OCI-LY7 (cell line): ENCODE measurements at regions of chr17 and their contacts with region 1.

Region 1: DNA sequence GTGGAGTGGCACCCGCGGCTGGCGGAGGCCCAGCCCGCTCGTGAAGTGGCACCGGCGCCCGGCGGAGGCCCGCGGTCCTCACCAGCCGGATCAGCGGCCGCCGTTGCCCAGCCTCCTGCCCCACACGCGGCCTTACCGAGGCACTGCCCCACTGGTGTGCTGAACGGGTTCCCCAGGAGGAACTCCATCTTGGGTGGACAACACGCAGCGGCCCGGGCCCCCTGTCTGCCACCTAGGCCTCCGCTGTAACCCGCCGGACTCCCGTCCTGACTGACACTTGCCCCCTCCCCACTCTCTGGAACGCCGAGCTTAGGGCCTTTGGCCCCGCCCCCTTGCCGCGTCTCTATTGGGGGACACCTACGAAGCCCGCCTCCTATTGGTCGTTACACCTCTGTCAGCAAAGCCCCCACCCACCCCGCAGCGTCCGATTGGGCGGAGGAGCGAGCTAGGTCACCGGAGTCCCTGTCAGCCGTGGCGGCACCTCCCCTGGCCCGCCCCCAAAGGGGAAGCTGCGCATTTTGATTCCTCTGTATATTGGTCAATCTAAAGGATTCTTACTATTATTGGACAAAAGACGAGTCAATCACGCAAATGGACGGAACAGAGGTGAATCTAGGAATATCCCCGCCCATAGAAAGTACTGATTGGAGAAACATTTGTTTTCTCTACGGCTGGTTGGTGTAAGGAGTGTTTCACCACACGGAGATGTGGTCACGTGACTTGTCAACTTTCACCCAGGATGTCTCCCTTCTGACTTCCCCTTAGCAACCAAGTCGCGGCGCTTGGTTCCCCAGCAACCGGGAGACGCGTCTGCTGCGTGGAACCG is at the starts of genes DRC3 and TOM1L2:
- DNase-seq: peak; percentile 100
- H3K4me3 ChIP-seq: peak within 1 kb of the TSS; percentile 81
- H3K27ac ChIP-seq: no peak within 1 kb of the TSS
- H3K4me1 ChIP-seq: peaks cover 12% of the 10 kb centered on the region
- CTCF ChIP-seq: no peak
- total RNA-seq, gene DRC3: not detected in 2 replicates
- total RNA-seq, gene TOM1L2: 4.9 and 5.4 TPM in 2 replicates

Region 2: DNA sequence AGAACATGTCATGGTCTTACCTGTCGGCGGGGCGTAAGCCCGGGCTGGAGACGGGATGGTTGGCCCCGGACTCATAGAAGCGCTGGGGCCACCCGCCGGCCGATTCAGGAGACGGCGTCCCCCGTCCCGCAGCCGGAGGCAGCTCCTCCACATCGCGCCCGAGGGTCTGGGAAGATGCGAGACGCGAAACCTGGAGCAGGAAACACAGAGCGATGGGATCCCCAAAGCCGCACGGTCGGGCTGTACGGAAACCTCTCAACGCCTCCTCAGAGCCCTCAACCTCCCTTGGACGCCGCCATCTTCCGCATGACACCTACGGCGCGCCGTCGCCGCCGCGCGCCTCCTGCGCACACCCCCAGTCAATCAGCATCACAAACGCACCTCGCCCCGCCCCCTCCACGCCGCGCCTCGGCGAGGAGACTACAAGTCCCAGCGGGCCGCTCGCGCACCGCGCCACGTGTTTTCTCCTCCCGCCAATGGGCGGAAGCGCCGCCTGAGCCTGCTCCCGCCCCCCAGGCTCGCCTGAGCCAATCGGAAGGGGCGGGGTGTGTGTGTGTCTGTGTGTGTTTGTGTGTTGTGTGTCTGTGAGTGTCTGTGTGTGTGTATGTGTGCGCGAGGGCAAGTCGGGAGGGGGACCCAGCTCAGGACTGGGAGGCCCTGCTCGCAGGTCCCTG is 66.7 kb after region 1 on chr17 and contains the starts of genes ATPAF2 and GID4:
- CTCF ChIA-PET with region 1: no interaction called
- POLR2A ChIA-PET with region 1: interaction called, 3 read pairs
- intact Hi-C with region 1: loop called (anchors 2 kb)
- DNase-seq: peak; percentile 100
- H3K4me3 ChIP-seq: peak within 1 kb of the TSS; percentile 82
- H3K27ac ChIP-seq: peak within 1 kb of the TSS; percentile 49
- H3K4me1 ChIP-seq: peaks cover 41% of the 10 kb centered on the region
- CTCF ChIP-seq: peak; percentile 28; the same call in 1 of the 2 replicates
- total RNA-seq, gene ATPAF2: 34.8 and 56.2 TPM in 2 replicates
- total RNA-seq, gene GID4: 5.1 and 6.3 TPM in 2 replicates

Region 3: DNA sequence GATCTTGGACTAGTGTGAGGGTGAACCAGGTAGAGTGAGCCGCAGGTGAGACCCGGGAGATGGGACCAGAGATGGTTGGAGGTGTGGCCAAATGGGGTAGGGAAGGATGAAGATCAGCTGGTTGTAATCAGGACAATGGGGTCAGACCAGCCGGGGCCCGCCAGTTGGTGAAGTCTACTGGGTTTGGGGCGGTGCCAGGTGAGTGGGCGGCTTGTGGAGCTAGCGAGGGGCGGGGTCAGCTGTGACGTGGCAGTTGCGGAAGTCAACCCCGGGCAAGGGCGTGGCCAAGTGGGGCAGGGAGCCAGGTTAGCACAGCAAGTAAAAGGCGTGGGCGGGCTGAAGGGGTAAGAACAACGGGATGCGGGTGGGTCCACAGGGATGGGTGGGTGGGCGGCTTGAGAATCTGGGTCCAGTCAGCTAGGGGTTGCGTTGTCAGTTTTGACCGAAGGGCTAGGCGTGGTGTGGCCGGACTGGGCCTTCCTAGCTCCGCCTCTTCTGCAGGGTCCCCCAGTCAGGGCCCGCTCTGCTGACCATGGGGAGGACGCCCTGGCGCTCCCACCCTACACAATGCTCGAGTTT is 185.8 kb after region 1 on chr17:
- CTCF ChIA-PET with region 1: no interaction called
- POLR2A ChIA-PET with region 1: no interaction called
- intact Hi-C with region 1: loop called (anchors 1 kb)
- DNase-seq: peak; percentile 92
- H3K4me3 ChIP-seq: peak overlapping the region; percentile 58
- H3K27ac ChIP-seq: no peak overlapping the region
- H3K4me1 ChIP-seq: peaks cover 32% of the 10 kb centered on the region
- CTCF ChIP-seq: no peak